ENCODE measurements at regions of chr1 and their contacts with region 1.

Region 1: DNA sequence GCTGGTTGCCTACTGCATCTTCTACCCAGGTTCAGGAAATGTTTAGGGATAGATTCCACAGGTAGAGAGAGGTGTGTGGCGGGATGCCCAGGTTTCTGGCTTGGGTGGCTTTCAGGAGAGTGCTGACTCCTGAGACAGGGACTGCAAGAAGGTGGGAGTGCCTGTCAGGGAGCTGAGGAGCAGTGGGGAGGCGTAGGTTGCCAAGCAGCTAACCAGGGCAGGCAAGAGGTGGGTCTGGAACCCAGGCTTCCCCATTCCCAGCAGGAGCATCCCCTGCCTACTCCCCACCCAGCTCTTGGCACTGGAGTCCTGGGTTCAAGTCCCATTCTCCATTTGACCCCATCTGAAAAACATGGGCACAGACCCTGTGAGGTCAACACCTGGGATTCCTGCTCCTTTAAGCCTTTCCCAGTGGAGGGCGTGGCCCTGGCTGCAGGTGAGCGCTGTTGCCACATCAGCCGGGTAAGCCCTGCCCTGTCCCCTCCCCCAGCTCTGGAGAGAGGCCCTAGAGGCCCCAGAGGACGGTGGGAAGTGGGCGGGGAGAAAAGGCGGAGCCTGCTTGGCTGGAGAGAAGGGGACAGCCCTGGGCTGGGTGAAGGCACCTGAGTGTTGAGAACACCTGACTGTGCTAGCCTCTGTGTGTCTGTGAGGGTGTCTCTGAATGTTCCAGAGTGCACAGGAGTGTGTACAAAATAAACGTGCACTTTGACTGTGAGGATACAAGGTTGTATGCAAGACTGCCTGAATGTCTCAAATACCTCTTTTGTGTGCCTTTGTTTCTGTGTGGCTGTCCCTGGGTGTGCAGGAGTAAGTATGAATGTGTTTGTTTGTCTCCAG is 14.0 kb upstream of the SYNC start:
- DNase-seq: peak in 12 of 14 experiments; percentile 9 to 69 (median 34)
- ATAC-seq: peak; percentile 51
- H3K4me3 ChIP-seq: no peak overlapping the region
- H3K4me3 Mint-ChIP-seq: no peak overlapping the region
- H3K27ac ChIP-seq: no peak overlapping the region
- H3K27ac Mint-ChIP-seq: no peak overlapping the region
- H3K4me1 ChIP-seq: peaks cover 17% of the 10 kb centered on the region
- H3K4me1 Mint-ChIP-seq: peaks cover 5% of the 10 kb centered on the region
- H3K27me3 ChIP-seq: peaks cover 0 to 3% of the 10 kb centered on the region in 2 experiments
- H3K27me3 Mint-ChIP-seq: peaks cover 8% of the 10 kb centered on the region
- CTCF ChIP-seq: no peak

Region 2: GRCh38 chr1:32695098-32695904 is 21.2 kb before region 1 on chr1:
- CTCF ChIA-PET with region 1: interaction called, 11 read pairs
- POLR2A ChIA-PET with region 1: no interaction called
- intact Hi-C with region 1: no loop called
- DNase-seq: no peak
- ATAC-seq: no peak
- H3K4me3 ChIP-seq: no peak overlapping the region
- H3K4me3 Mint-ChIP-seq: no peak overlapping the region
- H3K27ac ChIP-seq: no peak overlapping the region
- H3K27ac Mint-ChIP-seq: no peak overlapping the region
- H3K4me1 ChIP-seq: peaks cover 7% of the 10 kb centered on the region
- H3K4me1 Mint-ChIP-seq: no peaks in the 10 kb centered on the region
- H3K27me3 ChIP-seq: no peaks in the 10 kb centered on the region
- H3K27me3 Mint-ChIP-seq: peaks cover 4% of the 10 kb centered on the region
- CTCF ChIP-seq: no peak

Region 3: DNA sequence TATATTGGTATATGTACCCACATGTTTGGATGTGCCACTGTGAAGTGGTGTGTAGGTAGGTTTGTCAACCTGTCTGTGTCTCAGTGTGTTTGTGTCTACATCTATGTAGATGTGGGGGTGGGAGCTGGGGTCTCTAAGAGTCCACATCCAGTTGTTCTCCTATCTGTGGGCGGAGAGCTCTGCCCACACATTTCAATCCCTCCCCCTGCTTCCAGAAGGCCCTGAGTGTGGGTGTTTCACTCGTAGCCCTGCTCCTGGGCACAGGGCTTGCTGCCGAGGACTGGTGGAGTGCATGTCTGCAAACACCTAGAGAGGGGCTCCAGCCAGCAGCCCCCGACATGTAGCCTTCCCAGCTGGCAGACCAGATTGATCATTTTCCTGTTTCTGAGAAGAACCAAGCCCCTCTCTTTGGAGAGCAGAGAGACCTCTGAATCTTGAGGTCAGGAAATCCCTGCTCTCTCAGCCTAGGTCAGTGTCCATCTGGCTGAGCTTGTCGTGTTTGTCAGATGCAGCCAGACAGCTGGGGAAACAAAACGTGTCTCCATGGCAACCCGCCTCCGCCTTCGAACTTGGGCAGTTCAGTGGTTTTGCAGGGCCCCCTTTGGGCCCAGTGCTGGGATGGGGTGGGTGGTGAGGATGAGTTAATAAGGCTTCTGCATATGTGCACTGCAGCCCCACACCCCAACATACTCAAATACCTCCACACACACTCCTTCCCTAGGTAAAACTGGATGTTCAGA is 17.2 kb after region 1 on chr1:
- CTCF ChIA-PET with region 1: interaction called, 11 read pairs
- POLR2A ChIA-PET with region 1: no interaction called
- intact Hi-C with region 1: no loop called
- DNase-seq: no peak
- ATAC-seq: no peak
- H3K4me3 ChIP-seq: no peak overlapping the region
- H3K4me3 Mint-ChIP-seq: no peak overlapping the region
- H3K27ac ChIP-seq: no peak overlapping the region
- H3K27ac Mint-ChIP-seq: no peak overlapping the region
- H3K4me1 ChIP-seq: no peaks in the 10 kb centered on the region
- H3K4me1 Mint-ChIP-seq: peaks cover 9% of the 10 kb centered on the region
- H3K27me3 ChIP-seq: no peaks in the 10 kb centered on the region
- H3K27me3 Mint-ChIP-seq: peaks cover 10% of the 10 kb centered on the region
- CTCF ChIP-seq: no peak

Region 4: GRCh38 chr1:32773018-32773763 is 56.7 kb after region 1 on chr1:
- CTCF ChIA-PET with region 1: interaction called, 93 read pairs
- POLR2A ChIA-PET with region 1: interaction called, 13 read pairs
- intact Hi-C with region 1: loop called (anchors 1 kb)
- DNase-seq: peak; percentile 59 to 85 (median 71)
- ATAC-seq: peak; percentile 89
- H3K4me3 ChIP-seq: no peak overlapping the region
- H3K4me3 Mint-ChIP-seq: no peak overlapping the region
- H3K27ac ChIP-seq: no peak overlapping the region
- H3K27ac Mint-ChIP-seq: no peak overlapping the region
- H3K4me1 ChIP-seq: peaks cover 8% of the 10 kb centered on the region
- H3K4me1 Mint-ChIP-seq: peaks cover 5% of the 10 kb centered on the region
- H3K27me3 ChIP-seq: no peaks in the 10 kb centered on the region
- H3K27me3 Mint-ChIP-seq: no peaks in the 10 kb centered on the region
- CTCF ChIP-seq: peak; percentile 87

Region 5: GRCh38 chr1:32876341-32877210 is 160.0 kb after region 1 on chr1:
- CTCF ChIA-PET with region 1: interaction called, 9 read pairs
- POLR2A ChIA-PET with region 1: no interaction called
- intact Hi-C with region 1: loop called (anchors 1 kb)
- DNase-seq: peak in 13 of 14 experiments; percentile 30 to 77 (median 46)
- ATAC-seq: peak; percentile 85
- H3K4me3 ChIP-seq: no peak overlapping the region
- H3K4me3 Mint-ChIP-seq: no peak overlapping the region
- H3K27ac ChIP-seq: no peak overlapping the region
- H3K27ac Mint-ChIP-seq: no peak overlapping the region
- H3K4me1 ChIP-seq: peaks cover 15% of the 10 kb centered on the region
- H3K4me1 Mint-ChIP-seq: peaks cover 1% of the 10 kb centered on the region
- H3K27me3 ChIP-seq: peaks cover 17 to 25% of the 10 kb centered on the region in 2 experiments
- H3K27me3 Mint-ChIP-seq: peaks cover 66% of the 10 kb centered on the region
- CTCF ChIP-seq: peak; percentile 76

Measured in CD4-positive, alpha-beta T cell (primary cell).